Activated naive CD4-positive, alpha-beta T cell treated with anti-CD3 and anti-CD28 coated beads, Interleukin-2, amount 10 ng/mL, durations not matched to agents 7 days and 5 days (primary cell): ENCODE measurements at regions of chr17 and their contacts with region 1.

Region 1: DNA sequence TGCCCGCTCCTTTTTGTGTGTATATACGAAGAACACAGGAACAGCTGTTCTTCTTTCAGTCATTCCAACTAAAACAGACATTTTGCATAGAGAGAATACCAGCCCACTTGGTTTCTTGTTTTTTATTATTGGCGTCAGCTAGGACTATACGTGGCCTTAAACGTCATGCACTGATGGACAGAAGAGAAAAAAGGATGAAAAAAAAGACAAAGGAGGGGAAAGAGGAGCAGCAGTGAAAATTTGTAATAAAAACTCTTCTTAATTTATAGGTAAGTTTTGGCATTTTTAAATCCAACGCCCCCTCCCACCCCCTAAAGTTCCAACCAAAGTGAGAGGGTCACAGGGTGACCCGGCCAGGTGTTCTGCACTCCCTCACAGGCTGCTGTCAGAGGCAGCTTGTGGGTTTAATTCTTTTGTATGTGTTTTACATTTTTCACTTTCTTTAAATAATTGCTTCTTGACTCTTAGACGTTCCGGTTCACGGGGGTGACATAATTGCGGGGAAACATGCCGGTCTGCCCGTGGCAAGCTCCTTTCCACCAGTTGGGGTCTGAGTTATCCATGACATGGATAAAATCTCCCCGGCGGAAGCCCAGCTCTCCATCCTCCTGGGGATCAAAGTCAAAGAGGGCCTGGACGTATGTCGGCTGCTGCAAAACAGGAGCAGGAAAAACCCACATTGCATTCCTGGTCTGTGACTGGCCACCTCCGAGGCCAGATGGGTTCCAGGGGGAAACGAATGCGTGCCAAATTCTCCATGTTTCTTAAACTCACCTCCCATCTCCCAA is 30.9 kb upstream of the SLC25A19 start:
- DNase-seq: no peak
- H3K4me3 Mint-ChIP-seq: no peak overlapping the region
- H3K27ac Mint-ChIP-seq: no peak overlapping the region
- H3K4me1 Mint-ChIP-seq: peaks cover 17% of the 10 kb centered on the region
- H3K27me3 Mint-ChIP-seq: no peaks in the 10 kb centered on the region

Region 2: GRCh38 chr17:74852237-74853047 is 467.7 kb before region 1 on chr17:
- CTCF ChIA-PET with region 1: no interaction called
- DNase-seq: peak; percentile 80
- H3K4me3 Mint-ChIP-seq: peak overlapping the region; percentile 66
- H3K27ac Mint-ChIP-seq: no peak overlapping the region
- H3K4me1 Mint-ChIP-seq: peaks cover 12% of the 10 kb centered on the region
- H3K27me3 Mint-ChIP-seq: peaks cover 84% of the 10 kb centered on the region

Region 3: DNA sequence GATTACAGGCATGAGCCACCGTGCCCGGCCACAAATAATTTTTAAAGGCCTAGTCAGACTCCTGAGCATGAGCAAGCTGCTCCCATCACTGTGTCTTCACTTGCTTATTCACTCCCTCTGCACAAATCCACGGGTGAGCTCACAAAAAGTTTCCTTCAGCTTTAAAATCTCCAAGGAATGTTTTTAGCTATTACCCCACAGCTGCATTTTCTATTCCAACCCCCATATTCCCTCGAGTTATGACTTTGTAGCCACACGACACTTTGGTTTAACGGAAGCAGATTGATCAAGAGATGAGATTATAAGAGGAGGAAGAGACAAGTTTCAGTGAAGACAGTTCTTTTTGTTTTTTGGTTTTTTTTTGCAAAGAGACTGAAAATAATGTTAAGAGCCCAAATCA is 18.2 kb after region 1 on chr17:
- CTCF ChIA-PET with region 1: interaction called, 12 read pairs
- DNase-seq: no peak
- H3K4me3 Mint-ChIP-seq: peak overlapping the region; percentile 59
- H3K27ac Mint-ChIP-seq: peak overlapping the region; percentile 90
- H3K4me1 Mint-ChIP-seq: peaks cover 81% of the 10 kb centered on the region
- H3K27me3 Mint-ChIP-seq: no peaks in the 10 kb centered on the region

Region 4: DNA sequence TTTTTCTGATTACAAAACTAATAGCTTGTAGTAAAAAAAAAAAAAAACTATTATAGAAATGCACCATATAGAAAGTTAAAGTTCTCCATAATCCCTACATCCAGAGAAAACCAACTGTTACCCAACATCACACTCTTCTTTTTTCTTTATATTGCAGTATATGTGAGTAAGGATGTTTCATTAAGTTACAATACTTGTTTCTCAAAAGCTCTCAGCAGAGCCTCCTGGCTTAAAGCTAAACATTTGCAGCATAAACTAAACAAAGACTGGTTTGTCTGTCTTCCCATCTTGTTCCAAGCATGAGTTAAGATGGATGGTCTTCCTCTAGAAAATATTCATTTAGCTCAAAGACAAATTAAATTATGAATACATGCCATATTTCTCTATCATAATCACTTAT is 60.2 kb after region 1 on chr17:
- CTCF ChIA-PET with region 1: interaction called, 20 read pairs
- DNase-seq: no peak
- H3K4me3 Mint-ChIP-seq: no peak overlapping the region
- H3K27ac Mint-ChIP-seq: no peak overlapping the region
- H3K4me1 Mint-ChIP-seq: peaks cover 6% of the 10 kb centered on the region
- H3K27me3 Mint-ChIP-seq: no peaks in the 10 kb centered on the region

Region 5: DNA sequence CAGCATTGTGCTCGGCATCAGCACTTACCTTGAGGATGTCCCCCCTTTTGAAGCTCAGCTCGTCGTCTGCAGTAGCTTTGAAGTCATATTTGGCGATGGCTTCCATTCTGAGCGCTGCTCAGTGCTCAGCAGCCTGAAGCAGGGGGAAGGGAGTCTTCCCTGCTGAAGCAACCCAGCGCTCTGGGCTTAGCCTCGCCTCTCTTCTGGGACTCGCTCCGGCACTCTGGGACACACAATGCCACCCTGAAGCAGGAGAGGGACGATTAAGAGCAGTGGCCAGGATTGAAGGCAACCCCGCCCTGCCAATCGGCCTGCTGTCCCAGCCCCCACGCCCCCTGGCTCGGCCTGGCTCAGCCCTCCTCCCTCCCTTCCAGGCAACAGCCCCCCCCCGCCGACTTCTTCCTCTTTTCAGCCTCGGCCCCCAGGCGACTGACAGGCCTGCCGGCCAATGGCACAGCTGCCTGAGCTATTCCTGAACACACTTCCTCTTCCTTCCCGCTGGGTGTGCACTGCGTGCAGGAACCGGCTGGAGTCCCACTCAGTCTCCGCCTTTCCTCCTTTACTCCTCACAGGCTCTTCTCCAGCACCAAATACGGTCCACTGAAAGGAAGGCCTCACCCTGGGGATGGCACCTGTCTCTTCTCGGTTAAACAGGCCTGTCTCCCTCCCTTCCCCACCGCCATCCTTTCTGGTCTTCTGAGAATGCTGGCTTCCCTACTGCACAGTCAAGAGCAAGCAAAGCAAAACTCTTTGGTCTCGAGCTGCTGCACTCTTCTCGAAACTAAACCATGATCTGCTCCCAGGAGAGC is 73.6 kb after region 1 on chr17:
- CTCF ChIA-PET with region 1: interaction called, 25 read pairs
- DNase-seq: peak; percentile 92
- H3K4me3 Mint-ChIP-seq: peak overlapping the region; percentile 87
- H3K27ac Mint-ChIP-seq: peak overlapping the region; percentile 81
- H3K4me1 Mint-ChIP-seq: peaks cover 68% of the 10 kb centered on the region
- H3K27me3 Mint-ChIP-seq: no peaks in the 10 kb centered on the region

Region 6: GRCh38 chr17:75400326-75400939 is 80.3 kb after region 1 on chr17:
- CTCF ChIA-PET with region 1: interaction called, 25 read pairs
- DNase-seq: no peak
- H3K4me3 Mint-ChIP-seq: no peak overlapping the region
- H3K27ac Mint-ChIP-seq: no peak overlapping the region
- H3K4me1 Mint-ChIP-seq: peaks cover 45% of the 10 kb centered on the region
- H3K27me3 Mint-ChIP-seq: no peaks in the 10 kb centered on the region

Region 7: DNA sequence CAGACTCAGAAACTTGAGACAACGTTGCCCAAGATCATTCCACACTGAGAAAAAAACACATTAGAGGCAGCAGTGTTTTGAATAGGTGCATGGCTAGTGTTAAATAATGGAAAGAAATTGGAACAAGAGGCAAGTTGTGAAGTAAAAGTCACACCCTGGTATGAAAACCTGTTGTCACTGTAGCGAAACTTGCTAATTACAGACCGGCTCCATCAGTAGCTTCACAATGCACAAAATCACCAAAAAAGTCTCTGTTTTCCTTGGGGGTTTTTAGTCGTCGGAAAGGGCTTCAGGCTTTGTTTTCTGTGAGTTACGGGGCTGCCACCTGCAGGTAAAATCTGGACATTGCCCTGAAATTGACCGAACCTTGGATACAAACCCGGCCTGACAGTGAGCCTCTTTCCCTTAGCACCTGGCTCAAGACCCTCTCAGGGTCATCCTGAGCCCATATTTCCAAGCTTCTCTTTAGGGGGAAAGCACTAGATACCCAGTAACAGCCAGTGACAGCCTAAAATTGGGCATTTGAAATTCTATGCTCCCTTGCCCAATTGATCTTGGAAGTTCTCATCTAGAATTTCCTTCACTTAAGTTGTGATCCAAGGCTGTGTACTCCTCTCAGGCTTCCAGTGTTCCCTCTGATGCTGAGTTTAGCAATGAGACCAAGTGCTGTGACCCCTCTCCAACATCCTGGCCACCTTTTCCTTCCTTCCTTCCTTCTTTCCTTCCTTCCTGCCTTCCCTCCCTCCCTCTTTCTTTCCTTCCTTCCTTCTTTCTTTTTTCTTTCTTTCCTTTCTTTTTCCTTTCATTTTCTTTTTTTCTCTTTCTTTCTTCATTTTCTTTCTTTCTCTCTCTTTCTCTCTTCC is 92.6 kb after region 1 on chr17:
- CTCF ChIA-PET with region 1: interaction called, 18 read pairs
- DNase-seq: peak; percentile 79
- H3K4me3 Mint-ChIP-seq: peak overlapping the region; percentile 13
- H3K27ac Mint-ChIP-seq: peak overlapping the region; percentile 64
- H3K4me1 Mint-ChIP-seq: peaks cover 29% of the 10 kb centered on the region
- H3K27me3 Mint-ChIP-seq: peaks cover 45% of the 10 kb centered on the region